ENCODE measurements at regions of chr15 and their contacts with region 1.

Region 1: DNA sequence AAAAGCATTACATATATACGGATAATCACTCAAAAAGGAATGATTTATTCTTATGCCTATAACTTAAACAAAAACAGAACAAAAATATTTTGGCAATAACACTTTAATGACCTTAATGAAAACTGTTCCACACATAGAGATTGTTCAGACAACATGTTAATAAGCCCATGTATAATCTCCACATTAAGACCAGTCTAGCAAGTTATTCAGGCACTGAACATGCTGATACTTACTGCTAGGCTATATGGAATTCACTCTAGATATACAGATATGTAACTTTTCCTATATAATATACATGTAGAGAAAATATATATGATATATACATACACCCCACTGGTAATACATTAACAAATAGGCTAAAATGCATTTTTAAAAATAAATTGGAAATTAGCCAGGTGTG is 43.8 kb upstream of the USP50 start:
- DNase-seq: no peak
- ATAC-seq: no peak
- H3K4me3 ChIP-seq: no peak overlapping the region
- H3K4me3 Mint-ChIP-seq: no peak overlapping the region
- H3K27ac ChIP-seq: no peak overlapping the region
- H3K27ac Mint-ChIP-seq: no peak overlapping the region
- H3K4me1 ChIP-seq: no peaks in the 10 kb centered on the region
- H3K4me1 Mint-ChIP-seq: no peaks in the 10 kb centered on the region
- H3K27me3 ChIP-seq: no peaks in the 10 kb centered on the region
- H3K27me3 Mint-ChIP-seq: no peaks in the 10 kb centered on the region
- CTCF ChIP-seq: no peak

Region 2: GRCh38 chr15:48766196-48766595 is 1824.1 kb before region 1 on chr15:
- CTCF ChIA-PET with region 1: no interaction called
- POLR2A ChIA-PET with region 1: no interaction called
- intact Hi-C with region 1: no loop called
- DNase-seq: no peak
- ATAC-seq: no peak
- H3K4me3 ChIP-seq: no peak overlapping the region
- H3K4me3 Mint-ChIP-seq: no peak overlapping the region
- H3K27ac ChIP-seq: no peak overlapping the region
- H3K27ac Mint-ChIP-seq: no peak overlapping the region
- H3K4me1 ChIP-seq: no peaks in the 10 kb centered on the region
- H3K4me1 Mint-ChIP-seq: no peaks in the 10 kb centered on the region
- H3K27me3 ChIP-seq: no peaks in the 10 kb centered on the region
- H3K27me3 Mint-ChIP-seq: no peaks in the 10 kb centered on the region
- CTCF ChIP-seq: no peak

Region 3: GRCh38 chr15:50256188-50257041 is 333.9 kb before region 1 on chr15:
- CTCF ChIA-PET with region 1: no interaction called
- POLR2A ChIA-PET with region 1: no interaction called
- intact Hi-C with region 1: no loop called
- DNase-seq: no peak
- ATAC-seq: no peak
- H3K4me3 ChIP-seq: no peak overlapping the region
- H3K4me3 Mint-ChIP-seq: no peak overlapping the region
- H3K27ac ChIP-seq: no peak overlapping the region
- H3K27ac Mint-ChIP-seq: no peak overlapping the region
- H3K4me1 ChIP-seq: peaks cover 9% of the 10 kb centered on the region
- H3K4me1 Mint-ChIP-seq: peaks cover 13% of the 10 kb centered on the region
- H3K27me3 ChIP-seq: no peaks in the 10 kb centered on the region
- H3K27me3 Mint-ChIP-seq: no peaks in the 10 kb centered on the region
- CTCF ChIP-seq: no peak

Region 4: DNA sequence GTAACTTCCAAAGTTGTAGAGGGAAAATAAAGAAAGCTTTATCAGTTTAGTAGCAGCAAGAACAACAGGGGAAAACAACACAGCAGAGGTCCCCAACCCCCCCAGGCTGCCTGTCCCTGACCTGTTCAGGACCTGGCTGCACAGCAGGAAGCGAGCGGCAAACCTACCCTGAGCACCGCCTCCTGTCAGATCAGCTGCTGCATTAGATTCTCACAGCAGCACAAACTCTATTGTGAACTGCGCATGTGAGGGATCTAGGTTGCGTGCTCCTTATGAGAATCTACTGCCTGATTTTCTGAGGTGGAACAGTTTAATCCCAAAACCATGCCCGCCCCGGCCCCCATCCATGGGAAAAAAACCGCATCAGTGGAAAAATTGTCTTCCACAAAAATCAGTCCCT is 84.2 kb before region 1 on chr15:
- CTCF ChIA-PET with region 1: no interaction called
- POLR2A ChIA-PET with region 1: no interaction called
- intact Hi-C with region 1: no loop called
- DNase-seq: no peak
- ATAC-seq: no peak
- H3K4me3 ChIP-seq: no peak overlapping the region
- H3K4me3 Mint-ChIP-seq: no peak overlapping the region
- H3K27ac ChIP-seq: no peak overlapping the region
- H3K27ac Mint-ChIP-seq: no peak overlapping the region
- H3K4me1 ChIP-seq: no peaks in the 10 kb centered on the region
- H3K4me1 Mint-ChIP-seq: no peaks in the 10 kb centered on the region
- H3K27me3 ChIP-seq: no peaks in the 10 kb centered on the region
- H3K27me3 Mint-ChIP-seq: no peaks in the 10 kb centered on the region
- CTCF ChIP-seq: no peak

Region 5: DNA sequence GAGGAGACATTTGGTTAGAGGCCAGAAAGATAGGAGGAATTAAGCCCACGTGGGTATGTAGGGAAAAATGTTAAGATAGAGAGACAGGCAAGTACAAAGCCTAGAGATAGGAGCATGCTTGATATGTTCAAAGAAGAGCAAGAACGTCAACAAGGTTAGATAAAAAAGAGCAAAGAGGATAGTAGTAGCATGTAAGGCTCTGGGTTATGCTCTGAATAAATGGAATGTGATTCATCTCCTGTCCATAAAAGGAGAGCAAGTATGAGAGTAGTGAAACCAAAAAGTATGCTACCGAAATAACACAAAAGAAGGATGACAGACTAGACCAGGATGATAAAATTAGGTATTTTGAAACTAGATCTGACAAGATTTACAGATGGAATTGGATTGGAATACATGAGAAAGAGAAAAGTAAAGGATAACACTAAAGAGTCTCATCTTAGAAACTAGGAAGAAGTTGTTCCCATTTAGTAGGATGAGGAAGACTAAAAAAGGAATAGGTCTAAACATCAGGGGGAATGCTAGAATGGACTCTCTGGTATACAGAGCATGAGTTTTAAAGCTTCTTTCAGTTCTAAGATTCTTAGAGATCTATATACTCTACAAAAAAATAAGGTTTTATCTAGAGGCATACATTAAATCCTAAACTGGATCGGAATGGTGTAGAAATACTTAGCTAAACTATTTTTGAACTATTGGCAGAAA is 37.2 kb after region 1 on chr15:
- CTCF ChIA-PET with region 1: no interaction called
- POLR2A ChIA-PET with region 1: no interaction called
- intact Hi-C with region 1: loop called (anchors 5 to 10 kb)
- DNase-seq: no peak
- ATAC-seq: no peak
- H3K4me3 ChIP-seq: no peak overlapping the region
- H3K4me3 Mint-ChIP-seq: no peak overlapping the region
- H3K27ac ChIP-seq: no peak overlapping the region
- H3K27ac Mint-ChIP-seq: peak overlapping the region; percentile 3
- H3K4me1 ChIP-seq: no peaks in the 10 kb centered on the region
- H3K4me1 Mint-ChIP-seq: no peaks in the 10 kb centered on the region
- H3K27me3 ChIP-seq: no peaks in the 10 kb centered on the region
- H3K27me3 Mint-ChIP-seq: no peaks in the 10 kb centered on the region
- CTCF ChIP-seq: no peak

Region 6: GRCh38 chr15:50813877-50814276 is 223.6 kb after region 1 on chr15:
- CTCF ChIA-PET with region 1: no interaction called
- POLR2A ChIA-PET with region 1: no interaction called
- intact Hi-C with region 1: no loop called
- DNase-seq: no peak
- ATAC-seq: no peak
- H3K4me3 ChIP-seq: no peak overlapping the region
- H3K4me3 Mint-ChIP-seq: no peak overlapping the region
- H3K27ac ChIP-seq: no peak overlapping the region
- H3K27ac Mint-ChIP-seq: no peak overlapping the region
- H3K4me1 ChIP-seq: no peaks in the 10 kb centered on the region
- H3K4me1 Mint-ChIP-seq: no peaks in the 10 kb centered on the region
- H3K27me3 ChIP-seq: no peaks in the 10 kb centered on the region
- H3K27me3 Mint-ChIP-seq: peaks cover 5% of the 10 kb centered on the region
- CTCF ChIP-seq: no peak